ENCODE measurements at regions of chr1 and their contacts with region 1.

Region 1: GRCh38 chr1:24415334-24415909 is at the start of gene NIPAL3:
- DNase-seq: peak; percentile 100
- H3K4me3 ChIP-seq: peak within 1 kb of the TSS; percentile 79
- H3K27ac ChIP-seq: no peak within 1 kb of the TSS
- H3K4me1 ChIP-seq: peaks cover 34% of the 10 kb centered on the region
- CTCF ChIP-seq: peak; percentile 75
- total RNA-seq, gene NIPAL3: 6.7 and 11.7 TPM in 2 replicates

Region 2: DNA sequence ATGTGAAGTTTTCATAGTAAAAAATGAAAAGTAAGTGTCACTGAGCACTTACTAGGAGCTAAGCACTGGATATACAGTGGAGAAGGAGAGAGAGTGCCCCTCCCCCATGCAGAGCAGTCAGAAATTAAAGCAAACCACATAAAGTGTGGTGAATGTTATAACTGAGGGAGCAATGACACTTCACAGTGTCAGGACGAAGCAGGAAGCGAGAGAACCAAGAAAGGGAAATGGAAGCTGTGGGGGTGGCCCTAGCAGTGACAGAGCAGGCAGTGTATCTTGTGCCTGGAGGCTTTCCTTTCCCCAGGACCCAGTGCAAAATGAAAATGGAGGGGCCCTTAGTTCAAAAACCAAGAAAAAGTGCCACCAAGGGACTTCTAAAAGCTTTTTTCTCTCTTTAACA is 65.7 kb after region 1 on chr1:
- CTCF ChIA-PET with region 1: interaction called, 6 read pairs
- POLR2A ChIA-PET with region 1: no interaction called
- intact Hi-C with region 1: loop called (anchors 5 kb)
- DNase-seq: peak; percentile 80
- H3K4me3 ChIP-seq: peak overlapping the region; percentile 25
- H3K27ac ChIP-seq: peak overlapping the region; percentile 60
- H3K4me1 ChIP-seq: peaks cover 25% of the 10 kb centered on the region
- CTCF ChIP-seq: no peak

Region 3: DNA sequence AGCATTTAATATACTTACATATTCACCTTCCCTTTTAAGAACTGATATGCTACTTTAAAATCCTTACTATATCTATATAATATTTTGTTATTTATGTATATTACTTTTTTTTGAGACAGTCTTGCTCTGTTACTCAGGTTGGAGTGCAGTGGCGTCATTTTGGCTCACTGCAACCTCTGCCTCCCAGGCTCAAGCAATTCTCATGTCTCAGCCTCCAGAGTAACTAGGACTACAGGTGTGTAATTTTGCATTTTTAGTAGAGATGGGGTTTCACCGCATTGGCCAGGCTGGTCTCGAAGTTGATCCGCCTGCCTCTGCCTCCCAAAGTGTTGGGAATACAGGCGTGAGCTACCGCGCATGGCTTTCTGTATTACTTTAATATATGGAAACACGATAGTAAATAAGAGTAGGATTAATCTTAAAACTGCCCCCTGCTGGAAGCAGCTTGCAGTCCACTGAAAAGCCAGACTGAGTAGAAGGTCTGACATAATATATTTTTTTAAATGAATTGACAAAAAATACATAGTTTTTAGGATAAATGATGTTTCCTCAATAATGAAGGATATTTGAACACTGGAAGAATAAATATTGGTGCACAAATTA is 111.6 kb after region 1 on chr1:
- CTCF ChIA-PET with region 1: interaction called, 3 read pairs
- POLR2A ChIA-PET with region 1: interaction called, 4 read pairs
- intact Hi-C with region 1: loop called (anchors 1 kb)
- DNase-seq: peak; percentile 57
- H3K4me3 ChIP-seq: no peak overlapping the region
- H3K27ac ChIP-seq: no peak overlapping the region
- H3K4me1 ChIP-seq: peaks cover 62% of the 10 kb centered on the region
- CTCF ChIP-seq: peak; percentile 93

Region 4: DNA sequence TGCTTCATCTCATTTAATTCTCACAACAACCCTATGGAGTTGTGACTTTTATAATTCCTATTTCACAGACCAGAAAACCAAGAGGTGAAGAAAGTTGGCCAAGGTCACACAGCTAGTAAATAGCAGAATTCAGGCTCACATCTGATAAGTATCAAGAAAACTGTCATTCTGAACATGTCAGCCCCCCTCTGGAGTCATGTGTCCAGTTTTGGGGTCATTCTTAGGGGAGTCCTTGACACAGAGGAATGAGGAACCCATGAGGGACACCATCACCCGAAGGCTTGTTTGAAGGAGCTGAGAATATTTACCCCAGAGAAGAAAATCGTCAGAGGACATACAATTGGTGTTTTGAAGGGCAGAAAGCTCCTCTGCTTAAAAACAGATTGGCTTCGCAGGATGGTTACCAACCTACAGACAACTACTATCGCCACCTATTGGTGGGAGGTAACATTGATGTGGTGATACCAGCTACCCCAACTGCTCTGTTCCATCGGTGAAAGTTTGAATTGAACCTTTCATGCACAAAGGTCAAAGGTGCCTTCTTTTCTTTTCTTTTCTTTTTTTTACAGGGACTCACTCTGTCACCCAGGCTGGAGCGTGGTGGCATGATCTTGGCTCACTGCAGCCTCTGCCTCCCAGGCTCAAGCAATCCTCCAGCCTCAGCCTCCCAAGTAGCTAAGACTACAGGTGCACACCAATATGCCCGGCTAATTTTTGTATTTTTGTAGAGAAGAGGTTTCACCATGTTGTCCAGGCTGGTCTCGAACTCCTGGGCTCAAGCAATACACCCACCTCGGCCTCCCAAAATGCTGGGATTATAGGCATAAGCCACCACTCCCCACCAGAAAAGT is 171.8 kb after region 1 on chr1:
- CTCF ChIA-PET with region 1: interaction called, 5 read pairs
- POLR2A ChIA-PET with region 1: interaction called, 4 read pairs
- intact Hi-C with region 1: loop called (anchors 1 kb)
- DNase-seq: peak; percentile 88
- H3K4me3 ChIP-seq: no peak overlapping the region
- H3K27ac ChIP-seq: no peak overlapping the region
- H3K4me1 ChIP-seq: peaks cover 11% of the 10 kb centered on the region
- CTCF ChIP-seq: peak; percentile 91

Region 5: GRCh38 chr1:24635195-24635843 is 219.9 kb after region 1 on chr1:
- CTCF ChIA-PET with region 1: no interaction called
- POLR2A ChIA-PET with region 1: no interaction called
- intact Hi-C with region 1: loop called (anchors 5 kb)
- DNase-seq: peak; percentile 86
- H3K4me3 ChIP-seq: no peak overlapping the region
- H3K27ac ChIP-seq: no peak overlapping the region
- H3K4me1 ChIP-seq: peaks cover 4% of the 10 kb centered on the region
- CTCF ChIP-seq: peak; percentile 97

Measured in OCI-LY7 (cell line).